HepG2 (cell line): ENCODE measurements at regions of chr4 and their contacts with region 1.

Region 1: DNA sequence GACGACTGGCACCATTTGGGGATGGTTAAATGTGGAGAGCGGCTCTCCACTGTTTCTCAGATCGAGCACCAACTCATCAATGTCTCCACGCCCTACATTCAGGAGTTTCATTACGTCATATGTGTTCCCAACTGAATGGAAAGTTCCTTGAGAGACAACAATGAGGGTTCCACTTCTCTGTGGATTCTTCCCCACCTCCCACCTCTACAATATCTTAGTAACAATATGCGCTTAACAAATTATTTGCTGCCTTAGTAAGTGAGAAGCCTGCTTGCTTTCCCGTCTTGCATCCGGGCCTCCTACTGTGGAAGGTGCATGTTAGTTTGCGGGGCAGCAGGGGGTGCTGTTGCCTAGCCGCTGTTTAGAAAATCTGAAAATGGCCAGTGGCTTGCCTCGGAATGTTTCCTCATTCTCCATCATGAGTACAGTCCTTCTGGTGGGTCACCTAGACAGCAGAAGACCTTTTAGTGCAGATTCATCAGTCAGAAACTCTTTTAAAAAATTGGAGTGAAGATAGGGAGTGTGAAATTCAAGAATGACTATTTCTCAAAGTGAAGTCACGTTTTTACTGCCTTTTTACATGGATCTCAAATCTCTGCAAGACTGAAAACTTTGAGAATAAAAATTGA is 55.7 kb downstream of the PHOX2B start:
- DNase-seq: peak; percentile 30
- ATAC-seq: peak; percentile 92
- H3K4me3 ChIP-seq: peak overlapping the region in 1 of 3 experiments; percentile 47; a peak in 2 of 6 replicates
- H3K27ac ChIP-seq: no peak overlapping the region
- H3K4me1 ChIP-seq: no peaks in the 10 kb centered on the region
- H3K27me3 ChIP-seq: no peaks in the 10 kb centered on the region; a peak in 1 of 5 replicates
- CTCF ChIP-seq: peak; percentile 92
- EP300 ChIP-seq: no peak
- POLR2A ChIP-seq: no peak
- RAD21 ChIP-seq: peak; percentile 75

Region 2: GRCh38 chr4:41751449-41752061 is 58.7 kb after region 1 on chr4:
- CTCF ChIA-PET with region 1: no interaction called
- POLR2A ChIA-PET with region 1: no interaction called
- in situ Hi-C with region 1: no loop called
- intact Hi-C with region 1: loop called (anchors 1 kb)
- DNase-seq: no peak
- ATAC-seq: peak; percentile 95
- H3K4me3 ChIP-seq: no peak overlapping the region
- H3K27ac ChIP-seq: no peak overlapping the region
- H3K4me1 ChIP-seq: no peaks in the 10 kb centered on the region
- H3K27me3 ChIP-seq: peaks cover 1 to 46% of the 10 kb centered on the region in 2 experiments; a peak in 4 of 5 replicates
- CTCF ChIP-seq: peak; percentile 47
- EP300 ChIP-seq: no peak
- POLR2A ChIP-seq: no peak
- RAD21 ChIP-seq: peak; percentile 45; the same call in 1 of the 2 replicates

Region 3: DNA sequence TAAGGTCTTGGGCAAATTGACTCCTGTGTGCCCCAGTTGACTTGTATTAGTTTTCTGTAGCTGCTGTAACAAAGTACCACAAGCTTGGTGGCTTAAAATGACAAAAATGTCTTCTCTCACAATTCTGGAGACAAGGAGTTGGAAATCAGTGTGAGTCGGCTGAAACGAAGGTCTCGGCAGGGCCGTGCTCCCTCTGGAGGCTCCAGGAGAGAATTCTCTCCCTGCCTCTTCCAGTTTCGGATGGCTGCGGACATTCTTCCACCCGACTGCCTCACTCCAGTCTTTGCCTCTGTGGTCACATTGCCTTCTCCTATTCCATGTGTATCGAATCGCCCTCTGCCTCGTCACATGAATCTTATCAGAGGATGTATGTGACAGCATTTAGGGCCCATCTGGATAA is 121.7 kb after region 1 on chr4:
- CTCF ChIA-PET with region 1: no interaction called
- POLR2A ChIA-PET with region 1: no interaction called
- in situ Hi-C with region 1: no loop called
- intact Hi-C with region 1: loop called (anchors 5 kb)
- DNase-seq: no peak
- ATAC-seq: peak; percentile 81
- H3K4me3 ChIP-seq: no peak overlapping the region
- H3K27ac ChIP-seq: no peak overlapping the region
- H3K4me1 ChIP-seq: no peaks in the 10 kb centered on the region
- H3K27me3 ChIP-seq: no peaks in the 10 kb centered on the region; a peak in 1 of 5 replicates
- CTCF ChIP-seq: peak; percentile 34
- EP300 ChIP-seq: no peak
- POLR2A ChIP-seq: no peak
- RAD21 ChIP-seq: no peak

Region 4: GRCh38 chr4:41887821-41888686 is 195.2 kb after region 1 on chr4:
- CTCF ChIA-PET with region 1: interaction called, 34 read pairs
- POLR2A ChIA-PET with region 1: no interaction called
- in situ Hi-C with region 1: loop called (anchors 5 kb)
- intact Hi-C with region 1: loop called (anchors 1 kb)
- DNase-seq: peak; percentile 23
- ATAC-seq: no peak
- H3K4me3 ChIP-seq: no peak overlapping the region
- H3K27ac ChIP-seq: no peak overlapping the region
- H3K4me1 ChIP-seq: peaks cover 16% of the 10 kb centered on the region
- H3K27me3 ChIP-seq: no peaks in the 10 kb centered on the region
- CTCF ChIP-seq: peak; percentile 65
- EP300 ChIP-seq: no peak
- POLR2A ChIP-seq: no peak
- RAD21 ChIP-seq: no peak

Region 5: GRCh38 chr4:41957634-41958033 is 264.8 kb after region 1 on chr4:
- CTCF ChIA-PET with region 1: interaction called, 3 read pairs
- POLR2A ChIA-PET with region 1: no interaction called
- in situ Hi-C with region 1: no loop called
- intact Hi-C with region 1: loop called (anchors 1 kb)
- DNase-seq: peak; percentile 27
- ATAC-seq: no peak
- H3K4me3 ChIP-seq: no peak overlapping the region
- H3K27ac ChIP-seq: no peak overlapping the region
- H3K4me1 ChIP-seq: no peaks in the 10 kb centered on the region
- H3K27me3 ChIP-seq: no peaks in the 10 kb centered on the region
- CTCF ChIP-seq: peak; percentile 53
- EP300 ChIP-seq: no peak
- POLR2A ChIP-seq: no peak
- RAD21 ChIP-seq: no peak

Region 6: GRCh38 chr4:42282081-42282901 is 589.5 kb after region 1 on chr4:
- CTCF ChIA-PET with region 1: interaction called, 4 read pairs
- POLR2A ChIA-PET with region 1: no interaction called
- in situ Hi-C with region 1: no loop called
- intact Hi-C with region 1: loop called (anchors 2 kb)
- DNase-seq: peak; percentile 65
- ATAC-seq: peak; percentile 93
- H3K4me3 ChIP-seq: no peak overlapping the region
- H3K27ac ChIP-seq: no peak overlapping the region
- H3K4me1 ChIP-seq: 0 out of 2 replicates have a peak, but pooled peaks cover 5% of the 10 kb centered on the region
- H3K27me3 ChIP-seq: no peaks in the 10 kb centered on the region; a peak in 1 of 5 replicates
- CTCF ChIP-seq: peak; percentile 67
- EP300 ChIP-seq: no peak
- POLR2A ChIP-seq: no peak
- RAD21 ChIP-seq: peak; percentile 33; the same call in 1 of the 2 replicates

Region 7: DNA sequence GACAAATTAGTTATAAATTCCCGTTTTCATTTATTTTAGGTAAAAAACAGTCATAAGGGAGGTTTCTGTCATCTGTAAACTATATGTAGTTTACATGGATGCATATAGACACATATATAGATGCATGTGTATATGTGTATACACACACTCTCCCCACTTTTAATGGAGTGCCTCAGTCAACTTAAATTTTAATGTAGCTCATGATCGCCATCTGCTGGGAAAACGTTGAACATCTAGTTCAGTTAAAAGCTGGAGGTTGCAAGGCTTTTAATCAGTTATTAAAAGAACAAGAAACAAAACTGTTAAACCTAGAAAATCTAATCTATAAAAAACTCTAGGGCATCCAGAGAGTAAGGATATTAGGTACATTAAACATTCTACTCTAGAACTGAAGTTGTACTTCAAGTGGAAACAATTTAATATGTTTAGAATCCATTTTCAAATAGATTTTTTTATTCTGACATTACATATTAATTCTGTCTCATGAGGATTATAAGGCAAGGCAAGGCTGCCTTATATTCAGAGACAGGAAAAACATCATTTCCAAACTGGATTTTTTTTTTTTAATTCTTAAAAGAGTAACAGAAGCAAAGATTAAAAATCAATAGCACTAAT is 827.1 kb after region 1 on chr4:
- CTCF ChIA-PET with region 1: interaction called, 3 read pairs
- POLR2A ChIA-PET with region 1: no interaction called
- in situ Hi-C with region 1: loop called (anchors 25 kb)
- intact Hi-C with region 1: loop called (anchors 1 kb)
- DNase-seq: peak; percentile 12
- ATAC-seq: peak; percentile 76
- H3K4me3 ChIP-seq: no peak overlapping the region
- H3K27ac ChIP-seq: no peak overlapping the region
- H3K4me1 ChIP-seq: no peaks in the 10 kb centered on the region
- H3K27me3 ChIP-seq: no peaks in the 10 kb centered on the region
- CTCF ChIP-seq: peak; percentile 68
- EP300 ChIP-seq: no peak
- POLR2A ChIP-seq: no peak
- RAD21 ChIP-seq: peak; percentile 49; the same call in 1 of the 2 replicates